Activated T-helper 2 cell treated with anti-CD3 and anti-CD28 coated beads, Interferon-gamma antibody, Interleukin-2, Interleukin-4, amounts not matched to agents 10 μg/mL and 5 μg/mL and 100 μg/mL, durations not matched to agents 14 hours and 24 hours and 36 hours (primary cell): ENCODE measurements at regions of chr3 and their contacts with region 1.

Region 1: DNA sequence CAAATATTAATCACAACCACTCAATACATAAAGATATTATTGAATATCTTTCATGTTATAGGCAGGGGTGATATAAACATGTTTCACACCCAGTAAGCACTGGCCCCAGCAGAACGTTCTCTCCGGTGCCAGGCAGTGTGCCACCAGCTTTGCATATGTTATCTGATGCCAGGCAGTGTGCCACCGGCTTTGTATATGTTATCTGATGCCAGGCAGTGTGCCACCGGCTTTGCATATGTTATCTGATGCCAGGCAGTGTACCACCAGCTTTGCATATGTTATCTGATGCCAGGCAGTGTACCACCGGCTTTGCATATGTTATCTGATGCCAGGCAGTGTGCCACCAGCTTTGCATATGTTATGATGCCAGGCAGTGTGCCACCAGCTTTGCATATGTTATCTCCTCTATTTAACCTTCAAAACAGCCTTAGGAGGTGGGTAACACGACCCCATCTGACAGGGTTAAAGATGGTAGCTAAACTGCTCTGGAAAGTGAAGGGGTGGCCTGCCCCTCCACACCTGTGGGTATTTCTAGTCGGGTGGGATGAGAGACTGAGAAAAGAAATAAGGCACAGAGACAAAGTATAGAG is 6.9 kb downstream of the MUC20 start:
- DNase-seq: no peak
- H3K4me3 Mint-ChIP-seq: no peak overlapping the region
- H3K27ac Mint-ChIP-seq: no peak overlapping the region
- H3K4me1 Mint-ChIP-seq: no peaks in the 10 kb centered on the region
- H3K27me3 Mint-ChIP-seq: no peaks in the 10 kb centered on the region

Region 2: DNA sequence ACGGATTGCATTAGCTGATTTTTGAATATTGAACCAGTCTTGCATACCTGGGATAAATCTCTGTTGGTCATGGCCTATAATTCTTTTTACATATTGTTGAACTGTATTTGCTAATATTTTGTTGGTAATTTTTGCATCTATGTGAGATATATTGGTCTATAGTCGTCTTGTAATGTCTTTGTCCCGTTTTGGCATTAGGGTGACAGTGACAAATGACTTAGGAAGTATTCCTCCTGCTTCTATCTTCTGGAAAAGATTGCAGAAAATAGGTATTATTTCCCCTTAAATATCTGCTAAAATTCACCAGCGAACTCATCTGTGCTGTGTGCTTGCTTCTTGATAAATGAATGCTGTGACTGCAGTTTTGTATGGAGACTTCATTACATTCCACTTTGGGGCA is 16.7 kb after region 1 on chr3:
- intact Hi-C with region 1: loop called (anchors 2 kb)
- DNase-seq: no peak
- H3K4me3 Mint-ChIP-seq: no peak overlapping the region
- H3K27ac Mint-ChIP-seq: no peak overlapping the region
- H3K4me1 Mint-ChIP-seq: peaks cover 7% of the 10 kb centered on the region
- H3K27me3 Mint-ChIP-seq: peaks cover 10% of the 10 kb centered on the region

Region 3: DNA sequence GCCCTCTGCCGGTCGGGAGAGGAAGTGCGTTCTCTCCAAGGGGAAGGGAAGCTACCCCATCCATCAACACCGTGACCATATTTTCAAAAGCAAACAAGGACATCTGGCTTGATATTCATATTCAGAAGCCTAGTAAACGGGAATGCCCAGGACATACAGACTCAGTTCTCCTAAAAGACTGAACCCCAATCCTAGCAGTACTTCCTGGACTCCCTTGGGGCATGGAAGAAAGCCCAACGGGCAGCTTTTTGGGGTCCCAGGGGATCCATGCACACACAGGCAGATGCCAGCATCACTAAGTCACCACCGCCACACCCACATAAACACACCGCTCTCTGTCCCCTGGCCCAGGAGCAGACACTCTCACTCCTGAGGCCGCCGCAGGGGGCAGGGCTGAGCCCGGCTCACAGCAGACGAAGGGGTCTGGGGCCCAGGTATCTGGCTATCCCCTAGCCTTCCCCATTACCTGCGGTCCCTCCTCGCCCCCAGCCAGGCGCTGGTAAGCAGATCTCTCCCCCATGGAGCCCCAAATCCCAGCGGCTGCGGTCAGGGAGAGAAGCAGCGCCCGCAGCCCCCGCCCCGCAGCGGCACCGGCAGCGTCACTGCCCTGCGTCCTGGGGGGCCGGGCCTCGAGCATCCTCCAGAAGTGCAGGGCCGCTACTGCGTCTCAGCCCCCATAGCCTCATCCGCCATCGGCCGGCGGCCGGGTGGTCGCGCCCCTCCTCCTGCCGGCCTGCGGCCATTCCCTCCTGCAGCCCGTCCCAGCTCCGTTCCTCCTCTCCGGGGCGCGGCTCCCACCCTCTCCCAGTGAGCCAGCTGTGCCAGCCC is 167.3 kb after region 1 on chr3:
- intact Hi-C with region 1: no loop called
- DNase-seq: peak; percentile 64
- H3K4me3 Mint-ChIP-seq: peak overlapping the region; percentile 83
- H3K27ac Mint-ChIP-seq: peak overlapping the region; percentile 81
- H3K4me1 Mint-ChIP-seq: peaks cover 34% of the 10 kb centered on the region
- H3K27me3 Mint-ChIP-seq: no peaks in the 10 kb centered on the region